ENCODE measurements at regions of chr1 and their contacts with region 1.

Region 1: DNA sequence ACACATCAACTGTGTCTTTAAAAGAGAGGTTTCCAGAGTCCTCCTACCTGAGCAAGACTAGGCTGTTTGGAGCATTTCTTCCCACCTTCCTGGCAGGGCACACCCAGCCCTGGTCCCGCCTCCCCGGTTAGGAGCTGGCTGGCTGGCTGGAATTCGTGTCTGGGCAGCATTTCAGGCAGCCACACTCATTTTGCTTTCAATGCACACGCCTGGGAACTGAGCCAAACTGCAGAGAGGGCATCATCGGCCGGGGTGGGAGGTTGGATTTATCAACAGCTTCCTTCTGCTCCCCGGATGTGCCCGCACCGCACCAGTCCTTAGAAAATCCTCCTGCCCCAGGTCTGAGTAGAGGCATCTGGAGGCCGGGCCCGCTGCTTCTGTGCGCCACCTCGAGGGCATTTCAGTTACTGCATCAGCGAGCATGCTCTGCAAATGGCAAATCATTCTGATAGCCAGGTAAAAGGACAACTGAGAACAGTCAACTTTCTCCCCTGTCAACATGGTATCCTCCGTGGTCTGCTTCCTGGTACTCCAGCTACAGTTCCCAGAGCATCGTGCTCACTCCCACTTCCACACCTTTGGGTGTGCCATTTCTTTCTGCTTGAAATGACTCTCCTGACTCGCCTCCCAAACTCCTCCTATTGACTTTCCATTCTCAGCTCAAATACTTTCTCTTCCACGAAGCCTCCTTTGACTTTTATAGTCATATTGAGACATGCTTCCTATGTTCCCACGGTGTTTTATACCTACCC is 20.6 kb downstream of the TCEA3 start:
- DNase-seq: peak; percentile 92 to 96
- H3K4me3 ChIP-seq: peak overlapping the region; percentile 25; the same call in 1 of the 2 replicates
- H3K27ac ChIP-seq: peak overlapping the region; percentile 73
- H3K4me1 ChIP-seq: peaks cover 31% of the 10 kb centered on the region
- H3K27me3 ChIP-seq: no peaks in the 10 kb centered on the region
- CTCF ChIP-seq: peak; percentile 88

Region 2: GRCh38 chr1:23344111-23344986 is 59.6 kb before region 1 on chr1 and contains the start of gene HNRNPR:
- CTCF ChIA-PET with region 1: interaction called, 10 read pairs
- POLR2A ChIA-PET with region 1: interaction called, 25 read pairs
- intact Hi-C with region 1: loop called (anchors 1 kb)
- DNase-seq: peak; percentile 96 to 99
- H3K4me3 ChIP-seq: peak within 1 kb of the TSS; percentile 68
- H3K27ac ChIP-seq: peak within 1 kb of the TSS; percentile 81
- H3K4me1 ChIP-seq: peaks cover 39% of the 10 kb centered on the region
- H3K27me3 ChIP-seq: no peaks in the 10 kb centered on the region
- CTCF ChIP-seq: no peak
- total RNA-seq, gene HNRNPR: 149 and 198 TPM in 2 replicates

Region 3: GRCh38 chr1:23367791-23368561 is 35.9 kb before region 1 on chr1:
- CTCF ChIA-PET with region 1: interaction called, 4 read pairs
- POLR2A ChIA-PET with region 1: interaction called, 6 read pairs
- intact Hi-C with region 1: loop called (anchors 1 kb)
- DNase-seq: peak; percentile 95 to 99
- H3K4me3 ChIP-seq: peak overlapping the region; percentile 96
- H3K27ac ChIP-seq: peak overlapping the region; percentile 84
- H3K4me1 ChIP-seq: peaks cover 37% of the 10 kb centered on the region
- H3K27me3 ChIP-seq: no peaks in the 10 kb centered on the region
- CTCF ChIP-seq: 0 out of 2 replicates have a peak, but pooled peaks have one; percentile 22

Region 4: GRCh38 chr1:23376890-23377811 is 26.8 kb before region 1 on chr1:
- CTCF ChIA-PET with region 1: interaction called, 9 read pairs
- POLR2A ChIA-PET with region 1: no interaction called
- intact Hi-C with region 1: loop called (anchors 1 kb)
- DNase-seq: peak; percentile 71 to 95
- H3K4me3 ChIP-seq: no peak overlapping the region
- H3K27ac ChIP-seq: peak overlapping the region; percentile 70
- H3K4me1 ChIP-seq: peaks cover 8% of the 10 kb centered on the region
- H3K27me3 ChIP-seq: no peaks in the 10 kb centered on the region
- CTCF ChIP-seq: no peak

Region 5: DNA sequence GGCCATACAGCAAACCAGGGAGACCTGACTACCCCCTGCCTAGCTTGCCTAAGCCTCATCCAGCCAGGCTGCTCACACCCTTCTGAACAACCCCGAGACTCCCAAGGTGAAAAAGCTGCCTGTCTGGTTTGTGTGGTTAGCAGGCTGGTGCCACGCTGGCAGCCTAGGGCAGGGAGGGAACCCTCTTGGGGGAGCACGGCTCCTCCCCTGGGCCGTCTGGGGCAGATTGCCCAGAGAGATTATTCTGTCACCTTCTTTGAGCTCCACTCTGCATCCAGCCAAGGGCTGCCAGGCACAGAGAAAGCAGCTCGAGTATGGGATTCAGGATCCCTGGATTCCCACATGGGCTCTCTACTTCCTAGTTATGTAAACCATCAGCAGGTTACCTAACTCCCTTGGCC is 48.1 kb after region 1 on chr1:
- CTCF ChIA-PET with region 1: no interaction called
- POLR2A ChIA-PET with region 1: no interaction called
- intact Hi-C with region 1: loop called (anchors 2 kb)
- DNase-seq: peak; percentile 91 to 96
- H3K4me3 ChIP-seq: no peak overlapping the region
- H3K27ac ChIP-seq: no peak overlapping the region
- H3K4me1 ChIP-seq: peaks cover 33% of the 10 kb centered on the region
- H3K27me3 ChIP-seq: no peaks in the 10 kb centered on the region
- CTCF ChIP-seq: no peak

Region 6: DNA sequence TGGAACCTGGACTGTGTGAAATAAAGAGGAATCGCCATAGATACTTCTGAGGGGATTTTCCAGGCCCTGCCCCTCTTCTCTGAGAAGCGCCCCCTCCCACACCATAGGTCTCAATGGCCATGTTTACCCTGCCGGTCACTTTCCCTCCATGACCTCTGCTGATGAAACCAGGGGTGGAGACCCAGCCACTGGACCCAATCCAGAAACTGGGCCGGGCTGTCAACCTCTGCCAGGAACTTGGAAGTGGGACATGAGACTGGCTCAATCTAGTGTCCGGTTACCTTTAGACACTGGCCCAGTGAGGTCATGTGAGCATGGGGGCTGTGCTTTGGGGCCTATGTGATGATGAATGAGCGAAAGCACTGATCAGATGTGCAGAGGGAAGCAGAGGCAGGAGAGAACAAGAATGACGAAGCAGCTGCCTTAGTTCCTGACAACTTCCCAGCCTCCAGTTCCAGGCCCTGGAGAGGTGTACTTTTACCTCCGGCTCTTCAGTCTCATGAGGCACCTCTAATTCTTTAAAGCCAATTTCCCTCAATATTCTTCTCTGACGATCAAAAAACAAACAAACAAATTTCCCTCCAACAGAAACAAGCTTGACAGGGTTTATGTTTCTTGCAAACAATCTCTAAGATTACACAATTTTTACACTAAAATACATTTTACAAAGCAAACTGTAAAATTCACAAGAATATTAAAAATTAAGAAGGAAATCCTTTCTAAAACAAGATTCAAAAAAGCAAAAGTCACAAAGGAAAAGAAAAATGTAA is 75.2 kb after region 1 on chr1:
- CTCF ChIA-PET with region 1: no interaction called
- POLR2A ChIA-PET with region 1: interaction called, 5 read pairs
- intact Hi-C with region 1: loop called (anchors 5 kb)
- DNase-seq: peak in 1 of 2 experiments; percentile 80
- H3K4me3 ChIP-seq: no peak overlapping the region
- H3K27ac ChIP-seq: peak overlapping the region; percentile 64
- H3K4me1 ChIP-seq: peaks cover 55% of the 10 kb centered on the region
- H3K27me3 ChIP-seq: no peaks in the 10 kb centered on the region
- CTCF ChIP-seq: no peak

Region 7: DNA sequence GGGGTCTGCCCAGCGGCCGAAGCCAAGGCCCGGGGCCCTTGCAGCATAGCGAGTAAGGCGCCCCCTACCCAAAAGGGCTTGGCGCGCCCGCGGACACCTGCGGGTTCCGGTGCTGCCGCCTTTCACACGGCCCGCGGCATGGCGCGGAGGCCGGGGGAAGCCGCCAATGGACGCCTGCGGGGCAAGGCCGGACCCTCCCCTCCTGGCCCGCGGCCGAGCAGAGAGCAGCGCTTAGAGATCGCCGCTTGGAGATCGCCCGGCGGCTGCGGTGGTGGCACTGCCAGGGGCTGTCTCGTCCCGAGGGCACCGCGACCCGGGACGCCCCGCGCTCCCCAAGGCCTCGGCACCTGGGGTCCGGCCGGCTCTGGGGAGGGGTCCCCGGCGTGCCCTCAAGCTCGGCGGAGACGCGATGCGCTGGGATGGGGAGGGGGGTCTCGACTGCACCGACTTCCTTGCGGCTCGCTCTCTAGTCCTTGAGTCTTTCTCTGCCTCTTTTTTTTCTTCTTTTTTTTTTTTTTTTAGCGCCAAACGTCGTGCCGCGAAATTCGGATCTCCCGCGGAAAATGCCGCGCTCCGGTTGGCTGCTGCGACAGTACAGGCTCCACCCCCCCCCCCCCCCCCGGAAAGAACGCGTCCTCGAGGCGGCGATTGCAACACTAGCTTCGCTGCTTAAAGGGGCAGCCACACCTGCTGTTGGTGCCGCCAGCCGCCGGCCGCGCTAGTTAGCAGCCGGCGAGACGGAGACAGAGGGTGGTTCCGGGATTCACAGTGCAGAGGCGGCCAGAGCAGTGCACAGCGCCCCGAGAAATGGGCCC is 127.0 kb after region 1 on chr1 and contains the start of gene E2F2:
- CTCF ChIA-PET with region 1: interaction called, 4 read pairs
- POLR2A ChIA-PET with region 1: no interaction called
- intact Hi-C with region 1: loop called (anchors 1 kb)
- DNase-seq: peak; percentile 70 to 73
- H3K4me3 ChIP-seq: peak within 1 kb of the TSS; percentile 65
- H3K27ac ChIP-seq: peak within 1 kb of the TSS; percentile 12; the same call in 1 of the 2 replicates
- H3K4me1 ChIP-seq: peaks cover 70% of the 10 kb centered on the region
- H3K27me3 ChIP-seq: no peaks in the 10 kb centered on the region
- CTCF ChIP-seq: no peak; the same call in 1 of the 2 replicates
- total RNA-seq, gene E2F2: 7.6 and 9.0 TPM in 2 replicates

Measured in PC-9 (cell line).